Heart right ventricle (tissue), 16 donors: ENCODE measurements at regions of chr1 and their contacts with region 1.

Region 1: GRCh38 chr1:224113918-224114786 is at the start of gene FBXO28:
- DNase-seq: peak; percentile 94 to 97
- ATAC-seq: peak; percentile 98 to 100 (median 99)
- H3K4me3 ChIP-seq: peak within 1 kb of the TSS; percentile 68 to 97 (median 89)
- H3K27ac ChIP-seq: peak within 1 kb of the TSS; percentile 80 to 98 (median 94)
- H3K4me1 ChIP-seq: peaks cover 0 to 35% (median 25%) of the 10 kb centered on the region in 9 donors
- H3K27me3 ChIP-seq: peaks cover 0 to 10% (median 0%) of the 10 kb centered on the region in 7 donors
- CTCF ChIP-seq: no peak
- total RNA-seq, gene FBXO28: 16.9 to 22.9 (median 21.1) TPM

Region 2: GRCh38 chr1:224454397-224455066 is 340.4 kb after region 1 on chr1:
- intact Hi-C with region 1: loop called in 7 of 10 experiments (anchors 2 to 10 kb)
- DNase-seq: no peak
- ATAC-seq: no peak
- H3K4me3 ChIP-seq: no peak overlapping the region
- H3K27ac ChIP-seq: no peak overlapping the region
- H3K4me1 ChIP-seq: peaks cover 0 to 32% (median 14%) of the 10 kb centered on the region in 9 donors
- H3K27me3 ChIP-seq: no peaks in the 10 kb centered on the region
- CTCF ChIP-seq: no peak